Activated T-helper 1 cell treated with anti-CD3 and anti-CD28 coated beads, Interleukin-12 subunit alpha, Interleukin-12 subunit beta, Interleukin-2, Interleukin-4 antibody, amounts not matched to agents 30 ng/mL and 10 ng/mL and 1 ng/mL, durations not matched to agents 14 hours and 24 hours and 36 hours (primary cell): ENCODE measurements at regions of chr14 and their contacts with region 1.

Region 1: GRCh38 chr14:55579724-55580469 is at the start of gene KTN1:
- DNase-seq: peak; percentile 82
- H3K4me3 Mint-ChIP-seq: peak within 1 kb of the TSS; percentile 93
- H3K27ac Mint-ChIP-seq: peak within 1 kb of the TSS; percentile 92
- H3K4me1 Mint-ChIP-seq: peaks cover 29% of the 10 kb centered on the region
- H3K27me3 Mint-ChIP-seq: no peaks in the 10 kb centered on the region
- total RNA-seq, gene KTN1: 123 and 135 TPM in 2 replicates

Region 2: GRCh38 chr14:55051426-55052268 is 528.2 kb before region 1 on chr14 and contains the start of gene MAPK1IP1L:
- intact Hi-C with region 1: loop called (anchors 5 kb)
- DNase-seq: peak; percentile 90
- H3K4me3 Mint-ChIP-seq: peak within 1 kb of the TSS; percentile 94
- H3K27ac Mint-ChIP-seq: peak within 1 kb of the TSS; percentile 95
- H3K4me1 Mint-ChIP-seq: peaks cover 37% of the 10 kb centered on the region
- H3K27me3 Mint-ChIP-seq: no peaks in the 10 kb centered on the region
- total RNA-seq, gene MAPK1IP1L: 139 and 141 TPM in 2 replicates

Region 3: DNA sequence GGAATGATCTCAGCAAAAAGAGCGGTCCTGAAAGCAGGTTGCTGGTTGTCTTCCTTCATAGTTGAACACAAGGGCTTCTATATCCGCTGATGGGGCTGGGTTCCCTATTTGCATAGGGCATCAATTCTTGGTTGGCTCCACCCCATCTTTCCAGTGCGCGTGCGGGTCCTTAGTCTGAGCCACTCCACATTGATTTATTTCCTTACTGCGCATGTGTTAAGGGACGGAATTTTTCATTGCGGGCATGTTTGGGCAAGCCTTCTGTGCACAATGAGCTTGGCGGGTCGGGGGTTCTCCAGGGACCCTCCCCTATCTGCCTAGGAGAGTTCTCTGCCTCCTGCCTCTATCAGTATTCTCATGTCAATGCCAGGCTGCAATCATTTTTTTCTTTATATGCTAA is 367.3 kb before region 1 on chr14:
- intact Hi-C with region 1: loop called (anchors 5 kb)
- DNase-seq: no peak
- H3K4me3 Mint-ChIP-seq: no peak overlapping the region
- H3K27ac Mint-ChIP-seq: no peak overlapping the region
- H3K4me1 Mint-ChIP-seq: no peaks in the 10 kb centered on the region
- H3K27me3 Mint-ChIP-seq: peaks cover 9% of the 10 kb centered on the region

Region 4: DNA sequence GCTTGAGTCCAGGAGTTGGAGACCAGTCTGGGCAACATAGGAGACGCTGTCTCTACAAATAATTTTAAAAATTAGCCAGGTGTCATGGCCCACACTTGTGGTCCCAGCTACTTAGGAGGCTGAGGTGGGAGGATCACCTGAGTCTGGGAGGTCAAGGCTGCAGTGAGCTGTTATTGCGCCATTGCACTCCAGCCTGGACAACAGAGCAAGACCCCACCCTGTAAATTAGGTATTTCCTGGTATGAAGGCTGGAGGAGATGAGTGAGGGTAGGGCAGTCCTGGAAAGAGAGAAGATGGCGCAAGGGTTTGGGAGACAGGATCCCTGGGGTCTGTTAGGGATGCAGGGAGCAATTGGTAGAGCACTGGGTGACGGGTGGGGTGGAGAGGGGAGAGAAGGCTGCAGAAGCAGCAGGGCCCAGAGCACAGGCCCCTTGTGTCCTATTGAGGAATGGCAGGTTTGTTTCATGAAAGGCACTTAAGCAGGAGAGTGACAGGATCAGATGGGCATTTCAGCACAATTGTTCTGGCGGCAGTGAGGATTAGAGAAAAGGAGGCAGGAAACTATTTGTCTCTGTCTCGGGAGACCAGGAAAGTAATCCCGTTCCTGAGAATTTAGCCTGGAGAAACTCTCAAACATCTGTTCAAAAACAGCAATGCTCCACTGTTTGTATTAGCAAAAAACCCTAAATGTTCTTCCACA is 47.1 kb before region 1 on chr14:
- intact Hi-C with region 1: no loop called
- DNase-seq: no peak
- H3K4me3 Mint-ChIP-seq: no peak overlapping the region
- H3K27ac Mint-ChIP-seq: no peak overlapping the region
- H3K4me1 Mint-ChIP-seq: no peaks in the 10 kb centered on the region
- H3K27me3 Mint-ChIP-seq: peaks cover 1% of the 10 kb centered on the region

Region 5: DNA sequence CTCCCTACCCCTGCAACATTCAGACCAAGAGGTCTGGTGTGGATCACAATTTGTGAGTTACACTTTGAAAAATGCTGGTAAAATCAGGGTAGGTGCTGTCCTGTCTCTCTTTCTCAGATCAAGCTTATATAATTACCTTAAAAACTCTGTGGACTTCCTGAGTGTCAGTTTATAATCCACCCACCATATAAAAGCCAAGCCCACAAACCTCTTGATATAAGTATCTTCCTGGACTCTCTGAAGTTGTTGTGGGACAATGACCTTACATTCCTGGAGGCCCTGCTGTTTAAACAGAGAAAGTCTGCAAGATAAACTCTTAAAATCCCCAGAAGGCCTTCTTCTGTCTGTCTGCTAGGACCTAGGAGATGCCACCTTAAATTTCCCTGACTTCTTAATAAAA is 11.3 kb before region 1 on chr14:
- intact Hi-C with region 1: no loop called
- DNase-seq: no peak
- H3K4me3 Mint-ChIP-seq: no peak overlapping the region
- H3K27ac Mint-ChIP-seq: no peak overlapping the region
- H3K4me1 Mint-ChIP-seq: no peaks in the 10 kb centered on the region
- H3K27me3 Mint-ChIP-seq: peaks cover 6% of the 10 kb centered on the region

Region 6: DNA sequence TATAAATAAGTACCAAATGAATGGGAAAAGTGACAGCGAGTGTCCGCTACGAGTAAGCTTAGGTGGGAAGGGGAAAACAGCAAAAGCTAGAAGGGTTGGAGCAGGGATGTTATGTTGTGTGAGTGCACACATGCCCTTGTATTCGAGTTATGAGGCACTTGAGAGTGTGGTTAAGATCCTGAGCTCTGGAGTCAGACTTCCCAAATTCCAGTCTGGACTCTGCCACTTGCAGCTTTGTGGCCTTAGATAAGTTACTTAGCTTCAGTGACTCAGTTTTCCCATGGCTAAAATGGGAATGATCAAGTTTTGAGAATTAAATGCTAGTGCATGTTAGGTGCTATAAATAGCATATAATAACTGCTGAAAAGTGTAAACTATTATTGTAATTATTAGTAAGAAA is 45.0 kb after region 1 on chr14:
- intact Hi-C with region 1: loop called (anchors 5 kb)
- DNase-seq: no peak
- H3K4me3 Mint-ChIP-seq: no peak overlapping the region
- H3K27ac Mint-ChIP-seq: no peak overlapping the region
- H3K4me1 Mint-ChIP-seq: peaks cover 12% of the 10 kb centered on the region
- H3K27me3 Mint-ChIP-seq: no peaks in the 10 kb centered on the region

Region 7: GRCh38 chr14:56482310-56482911 is 902.5 kb after region 1 on chr14:
- intact Hi-C with region 1: no loop called
- DNase-seq: no peak
- H3K4me3 Mint-ChIP-seq: no peak overlapping the region
- H3K27ac Mint-ChIP-seq: no peak overlapping the region
- H3K4me1 Mint-ChIP-seq: no peaks in the 10 kb centered on the region
- H3K27me3 Mint-ChIP-seq: peaks cover 5% of the 10 kb centered on the region

Region 8: GRCh38 chr14:56579345-56580220 is 999.7 kb after region 1 on chr14 and contains the start of gene TMEM260:
- intact Hi-C with region 1: loop called (anchors 5 kb)
- DNase-seq: peak; percentile 84
- H3K4me3 Mint-ChIP-seq: peak within 1 kb of the TSS; percentile 91
- H3K27ac Mint-ChIP-seq: peak within 1 kb of the TSS; percentile 91
- H3K4me1 Mint-ChIP-seq: peaks cover 32% of the 10 kb centered on the region
- H3K27me3 Mint-ChIP-seq: peaks cover under 1% of the 10 kb centered on the region
- total RNA-seq, gene TMEM260: 14.2 and 17.2 TPM in 2 replicates

Region 9: DNA sequence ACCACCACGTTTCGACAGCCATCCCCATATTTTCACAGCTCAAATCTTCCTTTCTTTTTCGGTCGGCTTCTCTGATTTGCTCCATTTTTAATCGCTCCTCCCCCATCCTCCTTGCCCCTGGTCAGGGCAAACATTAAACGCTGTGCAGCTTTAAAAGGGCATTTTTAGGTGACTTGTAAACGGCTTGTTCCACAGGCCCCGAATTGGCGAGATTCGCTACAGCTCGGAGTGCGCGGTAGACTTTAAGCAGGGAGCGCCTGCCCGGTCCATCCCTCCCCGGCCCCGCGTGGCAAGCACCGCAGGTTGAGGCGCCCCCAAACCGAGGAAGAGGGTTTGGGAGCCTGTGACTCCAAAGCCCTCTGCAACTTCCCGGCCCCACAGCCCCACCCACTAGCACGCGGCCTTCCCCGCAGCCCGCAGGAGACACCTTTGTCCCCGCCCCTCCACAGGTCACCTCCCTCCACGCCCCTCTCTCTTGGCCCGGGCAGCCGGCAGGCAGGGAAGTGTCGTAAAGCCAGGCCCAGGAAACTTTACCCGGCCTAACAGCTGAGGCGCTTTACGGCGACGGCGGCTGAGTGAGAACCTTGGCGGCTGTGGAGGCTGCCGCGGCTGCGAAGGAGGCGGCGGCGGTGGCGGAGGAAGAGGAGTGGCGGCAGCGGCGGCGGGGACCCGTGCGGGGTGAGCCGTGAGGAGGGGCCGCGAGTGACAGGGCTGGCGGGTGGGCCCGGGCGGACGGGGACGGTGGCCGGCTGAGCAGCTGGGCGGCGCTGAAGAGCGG is 1810.3 kb after region 1 on chr14 and contains the start of gene NAA30:
- intact Hi-C with region 1: loop called (anchors 2 kb)
- DNase-seq: peak; percentile 91
- H3K4me3 Mint-ChIP-seq: peak within 1 kb of the TSS; percentile 97
- H3K27ac Mint-ChIP-seq: peak within 1 kb of the TSS; percentile 94
- H3K4me1 Mint-ChIP-seq: peaks cover 49% of the 10 kb centered on the region
- H3K27me3 Mint-ChIP-seq: peaks cover 2% of the 10 kb centered on the region
- total RNA-seq, gene NAA30: 20.8 and 20.9 TPM in 2 replicates